Calu3 (cell line): ENCODE measurements at regions of chr6 and their contacts with region 1.

Region 1: GRCh38 chr6:2866181-2866846 is 24.7 kb upstream of the SERPINB1 start:
- DNase-seq: no peak
- H3K4me3 Mint-ChIP-seq: peak overlapping the region; percentile 47
- H3K27ac Mint-ChIP-seq: peak overlapping the region; percentile 86
- H3K4me1 Mint-ChIP-seq: peaks cover 14% of the 10 kb centered on the region
- H3K27me3 Mint-ChIP-seq: no peaks in the 10 kb centered on the region
- CTCF ChIP-seq: no peak

Region 2: DNA sequence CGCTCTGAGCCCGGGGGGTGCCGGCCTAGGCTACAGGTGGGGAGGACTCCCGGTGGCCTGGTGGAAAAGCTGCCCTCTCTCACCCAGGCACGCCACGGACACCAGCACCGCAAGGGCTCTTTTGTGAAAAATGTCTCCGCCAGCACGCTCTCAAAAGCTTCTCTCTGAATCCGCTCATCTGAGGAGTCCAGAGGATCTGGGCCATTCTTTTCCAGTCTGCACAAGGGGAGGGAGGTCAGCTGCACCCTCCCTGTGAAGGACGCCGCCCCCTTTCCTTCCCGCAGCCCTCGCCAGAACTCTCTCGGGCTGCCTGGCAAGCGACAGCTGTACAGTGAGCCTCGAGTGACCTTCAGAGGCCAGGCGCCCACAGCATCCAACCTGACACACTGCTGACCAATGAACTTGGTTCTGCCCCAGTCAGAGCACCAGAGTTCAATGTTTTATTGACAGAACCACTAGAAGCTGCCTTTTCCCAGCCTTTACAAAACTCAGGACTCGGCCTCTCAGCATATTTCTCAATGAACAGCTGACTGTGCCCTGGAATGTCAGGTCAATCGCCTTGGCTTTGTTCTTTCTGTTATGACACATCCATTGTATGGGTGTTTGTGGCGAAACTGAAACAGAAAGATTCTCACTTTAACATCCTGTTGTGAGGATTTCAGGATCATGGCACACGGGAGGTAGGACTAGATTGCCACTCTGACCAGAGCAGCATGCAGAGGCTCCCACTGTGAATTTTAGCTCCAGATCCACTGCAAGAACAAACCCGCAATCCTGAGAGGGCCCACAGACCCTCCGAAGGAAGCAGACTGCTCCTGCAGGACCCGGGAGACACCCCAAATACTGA is 10.1 kb after region 1 on chr6:
- CTCF ChIA-PET with region 1: interaction called, 11 read pairs
- intact Hi-C with region 1: no loop called
- DNase-seq: peak; percentile 58
- H3K4me3 Mint-ChIP-seq: peak overlapping the region; percentile 69
- H3K27ac Mint-ChIP-seq: peak overlapping the region; percentile 87
- H3K4me1 Mint-ChIP-seq: peaks cover 39% of the 10 kb centered on the region
- H3K27me3 Mint-ChIP-seq: no peaks in the 10 kb centered on the region
- CTCF ChIP-seq: no peak